Cardiac septum (tissue), 1 donor: ENCODE measurements at regions of chr1 and their contacts with region 1.

Region 1: DNA sequence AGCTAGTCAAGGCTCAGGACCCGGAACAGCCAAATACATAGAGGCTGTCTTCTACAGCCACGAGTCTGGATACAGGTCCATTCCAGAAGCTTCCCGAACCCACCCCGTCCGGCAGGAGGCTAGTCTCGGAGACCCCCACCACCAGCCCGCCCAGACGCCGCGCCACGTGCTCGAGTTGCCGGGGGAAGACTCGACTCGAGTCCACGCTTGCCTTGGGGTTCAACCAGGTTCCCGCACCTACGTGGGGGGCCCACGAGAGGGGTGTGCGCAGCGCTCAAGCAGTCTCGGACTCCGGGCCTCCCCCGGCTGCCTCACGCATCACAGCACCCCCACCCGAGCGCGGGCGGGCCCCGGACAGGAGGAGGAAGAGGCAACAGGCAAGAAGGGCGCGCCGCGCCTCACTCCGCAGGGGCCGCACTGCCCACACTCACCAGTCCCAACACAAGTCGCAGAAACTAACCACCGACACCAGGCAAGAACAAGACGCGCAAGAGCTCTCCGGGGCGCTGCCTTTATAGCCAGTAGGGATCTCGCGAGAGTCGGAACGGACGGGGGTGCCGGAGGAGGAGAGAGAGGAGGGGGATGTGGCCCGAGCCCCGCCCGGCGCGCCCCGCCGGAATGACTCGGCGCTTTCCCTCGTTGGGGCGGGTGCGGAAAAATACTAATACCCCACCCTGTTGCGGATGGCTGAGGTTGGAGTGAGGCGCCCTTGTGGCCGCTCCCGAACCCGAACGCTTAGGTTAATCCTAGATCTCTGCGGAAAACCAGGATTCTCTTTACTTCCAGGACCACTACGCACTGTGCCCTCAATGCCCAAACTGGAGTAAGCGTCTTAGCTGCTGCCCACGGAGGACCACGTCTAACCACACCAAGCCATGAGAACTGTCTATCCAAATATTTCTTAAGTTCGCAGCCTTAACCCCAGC is at the start of gene PRDX1:
- DNase-seq: peak; percentile 97
- total RNA-seq, gene PRDX1: 267 TPM

Region 2: GRCh38 chr1:45550401-45551351 is 29.0 kb after region 1 on chr1 and contains the start of gene AKR1A1:
- intact Hi-C with region 1: loop called (anchors 1 kb)
- DNase-seq: peak; percentile 95
- total RNA-seq, gene AKR1A1: 47.3 TPM